Caco-2 (cell line): ENCODE measurements at regions of chr21 and their contacts with region 1.

Region 1: GRCh38 chr21:42513985-42514882 is 582 bp downstream of the SLC37A1 start:
- DNase-seq: peak in 1 of 2 experiments; percentile 48
- H3K4me3 ChIP-seq: peak overlapping the region; percentile 76
- H3K4me3 Mint-ChIP-seq: peak overlapping the region; percentile 79
- H3K27ac Mint-ChIP-seq: peak overlapping the region; percentile 29
- H3K4me1 ChIP-seq: peaks cover 31% of the 10 kb centered on the region
- H3K4me1 Mint-ChIP-seq: peaks cover 25% of the 10 kb centered on the region
- H3K27me3 ChIP-seq: no peaks in the 10 kb centered on the region
- H3K27me3 Mint-ChIP-seq: no peaks in the 10 kb centered on the region
- CTCF ChIP-seq: no peak

Region 2: GRCh38 chr21:42424914-42425541 is 89.2 kb before region 1 on chr21:
- CTCF ChIA-PET with region 1: no interaction called
- POLR2A ChIA-PET with region 1: no interaction called
- intact Hi-C with region 1: no loop called
- DNase-seq: no peak
- H3K4me3 ChIP-seq: no peak overlapping the region
- H3K4me3 Mint-ChIP-seq: no peak overlapping the region
- H3K27ac Mint-ChIP-seq: no peak overlapping the region
- H3K4me1 ChIP-seq: no peaks in the 10 kb centered on the region
- H3K4me1 Mint-ChIP-seq: peaks cover 6% of the 10 kb centered on the region
- H3K27me3 ChIP-seq: no peaks in the 10 kb centered on the region
- H3K27me3 Mint-ChIP-seq: peaks cover 9% of the 10 kb centered on the region
- CTCF ChIP-seq: no peak

Region 3: DNA sequence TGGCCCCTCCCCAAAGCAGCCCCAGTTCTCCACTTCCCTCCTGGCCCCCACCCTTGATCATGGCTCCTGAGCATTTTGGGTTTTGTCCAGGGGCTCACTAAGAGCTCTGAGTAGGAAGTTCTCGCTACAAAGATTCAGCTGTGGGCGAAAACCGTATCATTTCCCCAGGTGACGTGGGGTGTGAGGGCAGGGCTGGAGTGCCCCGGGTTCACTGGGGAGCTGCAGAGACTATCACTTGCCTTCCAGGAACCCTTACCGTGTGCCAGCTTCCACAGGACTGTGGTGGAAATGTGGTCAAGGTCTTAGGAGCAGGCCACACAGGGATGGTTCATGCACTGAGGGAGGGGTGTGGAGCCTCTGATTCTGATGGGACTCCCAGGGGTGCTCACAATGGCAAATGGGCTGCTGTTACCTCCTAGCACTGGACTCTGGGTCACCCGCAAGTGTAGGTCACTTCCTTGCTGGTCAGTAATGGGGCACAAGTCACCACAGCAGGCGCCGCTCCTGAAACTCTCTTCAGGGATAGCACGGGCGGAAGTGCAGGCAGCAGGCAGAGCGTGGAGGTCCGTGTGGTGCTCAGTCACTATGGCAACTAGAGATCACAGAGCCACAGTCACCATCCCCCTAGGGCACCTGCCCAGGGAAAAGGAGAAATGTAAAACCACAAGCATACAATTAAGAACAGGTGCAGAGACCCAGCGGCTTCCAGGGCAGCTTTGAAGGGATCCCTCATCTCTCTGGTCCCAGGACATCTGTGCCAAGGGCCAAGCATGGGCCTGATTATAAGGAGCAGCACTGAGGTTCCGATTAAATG is 53.6 kb before region 1 on chr21:
- CTCF ChIA-PET with region 1: no interaction called
- POLR2A ChIA-PET with region 1: no interaction called
- intact Hi-C with region 1: loop called (anchors 2 kb)
- DNase-seq: peak in 1 of 2 experiments; percentile 17
- H3K4me3 ChIP-seq: no peak overlapping the region
- H3K4me3 Mint-ChIP-seq: no peak overlapping the region
- H3K27ac Mint-ChIP-seq: no peak overlapping the region
- H3K4me1 ChIP-seq: peaks cover 30% of the 10 kb centered on the region
- H3K4me1 Mint-ChIP-seq: peaks cover 31% of the 10 kb centered on the region
- H3K27me3 ChIP-seq: no peaks in the 10 kb centered on the region
- H3K27me3 Mint-ChIP-seq: no peaks in the 10 kb centered on the region
- CTCF ChIP-seq: no peak